ENCODE measurements at regions of chr3 and their contacts with region 1.

Region 1: GRCh38 chr3:41893977-41894376 is 67.9 kb downstream of the ULK4 start:
- DNase-seq: peak in 1 of 2 donors; percentile 64
- ATAC-seq: no peak
- H3K4me3 ChIP-seq: no peak overlapping the region
- H3K4me3 Mint-ChIP-seq: no peak overlapping the region
- H3K27ac ChIP-seq: no peak overlapping the region
- H3K27ac Mint-ChIP-seq: no peak overlapping the region
- H3K4me1 ChIP-seq: no peaks in the 10 kb centered on the region
- H3K4me1 Mint-ChIP-seq: no peaks in the 10 kb centered on the region
- H3K27me3 ChIP-seq: no peaks in the 10 kb centered on the region
- H3K27me3 Mint-ChIP-seq: no peaks in the 10 kb centered on the region
- CTCF ChIP-seq: peak; percentile 65

Region 2: DNA sequence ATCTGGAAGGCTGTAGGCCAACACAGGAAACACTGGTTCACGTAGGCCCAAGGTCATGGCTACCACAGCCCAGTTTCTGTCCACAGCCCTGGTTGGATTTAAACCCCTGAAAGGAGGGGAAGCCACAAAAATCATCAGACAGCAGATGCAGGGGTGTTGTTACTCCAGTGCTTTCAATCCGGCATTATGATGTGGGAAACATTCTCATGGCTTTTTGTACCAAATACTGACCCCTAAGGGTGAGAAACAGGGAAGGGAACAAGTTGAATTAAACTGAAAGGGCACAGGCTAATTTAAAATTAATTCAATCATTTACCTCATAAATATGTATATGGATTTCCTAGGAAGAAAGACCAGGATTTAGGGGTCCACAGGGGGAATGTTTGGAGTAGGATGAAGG is 319.1 kb before region 1 on chr3:
- intact Hi-C with region 1: no loop called
- DNase-seq: no peak
- ATAC-seq: peak in 1 of 3 donors; percentile 21
- H3K4me3 ChIP-seq: no peak overlapping the region
- H3K4me3 Mint-ChIP-seq: no peak overlapping the region
- H3K27ac ChIP-seq: no peak overlapping the region
- H3K27ac Mint-ChIP-seq: no peak overlapping the region
- H3K4me1 ChIP-seq: no peaks in the 10 kb centered on the region
- H3K4me1 Mint-ChIP-seq: peaks cover 0 to 6% of the 10 kb centered on the region in 2 donors
- H3K27me3 ChIP-seq: no peaks in the 10 kb centered on the region
- H3K27me3 Mint-ChIP-seq: no peaks in the 10 kb centered on the region
- CTCF ChIP-seq: no peak

Region 3: GRCh38 chr3:41846850-41847249 is 47.1 kb before region 1 on chr3:
- intact Hi-C with region 1: no loop called
- DNase-seq: no peak
- ATAC-seq: no peak
- H3K4me3 ChIP-seq: no peak overlapping the region
- H3K4me3 Mint-ChIP-seq: no peak overlapping the region
- H3K27ac ChIP-seq: no peak overlapping the region
- H3K27ac Mint-ChIP-seq: no peak overlapping the region
- H3K4me1 ChIP-seq: peaks cover 7% of the 10 kb centered on the region
- H3K4me1 Mint-ChIP-seq: peaks cover 13 to 17% of the 10 kb centered on the region in 2 donors
- H3K27me3 ChIP-seq: no peaks in the 10 kb centered on the region
- H3K27me3 Mint-ChIP-seq: no peaks in the 10 kb centered on the region
- CTCF ChIP-seq: no peak

Region 4: DNA sequence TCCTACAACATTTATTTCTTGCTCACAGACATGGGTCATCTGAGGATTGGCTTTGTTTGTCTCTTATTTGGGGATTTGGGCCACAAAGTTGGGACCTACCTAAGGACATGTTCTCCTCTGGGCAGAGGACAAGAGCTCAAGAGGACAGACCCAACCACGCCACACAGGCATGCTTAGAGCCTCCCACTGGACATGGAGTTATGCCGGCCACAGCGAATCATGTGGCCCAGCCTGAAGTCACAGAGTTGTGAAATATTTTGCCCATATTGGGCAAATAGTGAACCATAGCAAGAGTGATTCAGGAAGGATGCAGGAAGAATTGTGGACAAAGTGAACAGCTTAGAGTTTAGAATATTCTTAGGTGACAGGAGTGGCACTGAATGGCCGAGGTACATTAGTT is 207.1 kb after region 1 on chr3:
- intact Hi-C with region 1: loop called (anchors 1 kb)
- DNase-seq: no peak
- ATAC-seq: no peak
- H3K4me3 ChIP-seq: no peak overlapping the region
- H3K4me3 Mint-ChIP-seq: no peak overlapping the region
- H3K27ac ChIP-seq: no peak overlapping the region
- H3K27ac Mint-ChIP-seq: no peak overlapping the region
- H3K4me1 ChIP-seq: no peaks in the 10 kb centered on the region
- H3K4me1 Mint-ChIP-seq: peaks cover 0 to 12% of the 10 kb centered on the region in 2 donors
- H3K27me3 ChIP-seq: no peaks in the 10 kb centered on the region
- H3K27me3 Mint-ChIP-seq: no peaks in the 10 kb centered on the region
- CTCF ChIP-seq: no peak

Region 5: DNA sequence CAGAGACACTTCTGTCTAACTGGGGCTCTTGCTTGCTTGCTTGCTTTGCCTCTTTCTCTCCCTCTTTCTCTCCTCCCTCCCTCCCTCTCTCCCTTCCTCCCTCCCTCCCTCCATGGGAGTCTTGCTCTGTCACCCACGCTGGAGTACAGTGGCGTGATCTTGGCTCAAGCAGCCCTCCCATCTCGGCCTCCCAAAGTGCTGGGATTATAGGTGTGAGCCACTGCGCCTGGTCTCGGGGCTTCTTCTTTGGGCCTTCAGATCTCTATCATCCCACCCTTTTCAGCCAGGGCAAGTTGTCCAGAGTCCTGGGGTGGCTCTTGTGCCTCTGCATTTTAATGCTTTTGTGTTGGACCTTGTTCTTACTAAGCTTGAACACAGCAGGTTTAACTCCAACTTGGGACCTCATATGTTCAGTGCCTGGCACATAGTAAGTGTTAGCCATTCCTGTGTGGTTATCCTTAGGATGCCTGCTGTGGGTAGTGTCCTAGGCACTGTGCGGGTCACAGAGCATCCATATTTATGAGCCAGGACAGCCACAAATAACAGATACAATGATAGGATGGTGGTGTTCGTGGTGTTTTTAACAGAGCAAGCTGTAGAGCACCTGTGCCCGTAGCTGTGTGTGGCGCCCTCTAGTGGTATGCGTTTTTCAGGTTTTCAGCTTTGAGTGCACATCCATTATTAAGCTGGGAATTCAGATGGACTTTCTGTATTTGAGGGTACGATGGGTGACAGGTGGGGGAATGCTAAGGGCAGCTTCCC is 296.9 kb after region 1 on chr3:
- intact Hi-C with region 1: loop called (anchors 1 kb)
- DNase-seq: peak; percentile 32 to 83
- ATAC-seq: peak; percentile 57 to 75 (median 66)
- H3K4me3 ChIP-seq: no peak overlapping the region
- H3K4me3 Mint-ChIP-seq: no peak overlapping the region
- H3K27ac ChIP-seq: no peak overlapping the region
- H3K27ac Mint-ChIP-seq: no peak overlapping the region
- H3K4me1 ChIP-seq: peaks cover 26% of the 10 kb centered on the region
- H3K4me1 Mint-ChIP-seq: peaks cover 10 to 23% of the 10 kb centered on the region in 2 donors
- H3K27me3 ChIP-seq: no peaks in the 10 kb centered on the region
- H3K27me3 Mint-ChIP-seq: no peaks in the 10 kb centered on the region
- CTCF ChIP-seq: peak; percentile 78

Region 6: GRCh38 chr3:42443819-42444436 is 550.0 kb after region 1 on chr3:
- intact Hi-C with region 1: loop called (anchors 5 kb)
- DNase-seq: peak; percentile 54 to 82
- ATAC-seq: peak; percentile 65 to 90 (median 79)
- H3K4me3 ChIP-seq: no peak overlapping the region
- H3K4me3 Mint-ChIP-seq: no peak overlapping the region
- H3K27ac ChIP-seq: no peak overlapping the region
- H3K27ac Mint-ChIP-seq: no peak overlapping the region
- H3K4me1 ChIP-seq: no peaks in the 10 kb centered on the region
- H3K4me1 Mint-ChIP-seq: no peaks in the 10 kb centered on the region
- H3K27me3 ChIP-seq: no peaks in the 10 kb centered on the region
- H3K27me3 Mint-ChIP-seq: peaks cover 16 to 31% of the 10 kb centered on the region in 2 donors
- CTCF ChIP-seq: peak; percentile 84

Region 7: GRCh38 chr3:42547401-42547945 is 653.5 kb after region 1 on chr3:
- intact Hi-C with region 1: loop called (anchors 10 kb)
- DNase-seq: peak; percentile 57 to 81
- ATAC-seq: peak; percentile 71 to 80 (median 78)
- H3K4me3 ChIP-seq: no peak overlapping the region
- H3K4me3 Mint-ChIP-seq: no peak overlapping the region
- H3K27ac ChIP-seq: no peak overlapping the region
- H3K27ac Mint-ChIP-seq: peak overlapping the region in 1 of 2 donors; percentile 11
- H3K4me1 ChIP-seq: no peaks in the 10 kb centered on the region
- H3K4me1 Mint-ChIP-seq: no peaks in the 10 kb centered on the region
- H3K27me3 ChIP-seq: no peaks in the 10 kb centered on the region
- H3K27me3 Mint-ChIP-seq: no peaks in the 10 kb centered on the region
- CTCF ChIP-seq: peak; percentile 91

Measured in natural killer cell (primary cell).